ENCODE measurements at regions of chr1 and their contacts with region 1.

Region 1: GRCh38 chr1:153566440-153567379 is 1.1 kb upstream of the S100A2 start:
- DNase-seq: peak; percentile 99
- H3K4me3 ChIP-seq: peak overlapping the region in 2 of 3 experiments; percentile 61 to 98
- H3K27ac ChIP-seq: peak overlapping the region; percentile 100
- H3K4me1 ChIP-seq: peaks cover 40% of the 10 kb centered on the region
- H3K27me3 ChIP-seq: no peaks in the 10 kb centered on the region
- CTCF ChIP-seq: no peak

Region 2: DNA sequence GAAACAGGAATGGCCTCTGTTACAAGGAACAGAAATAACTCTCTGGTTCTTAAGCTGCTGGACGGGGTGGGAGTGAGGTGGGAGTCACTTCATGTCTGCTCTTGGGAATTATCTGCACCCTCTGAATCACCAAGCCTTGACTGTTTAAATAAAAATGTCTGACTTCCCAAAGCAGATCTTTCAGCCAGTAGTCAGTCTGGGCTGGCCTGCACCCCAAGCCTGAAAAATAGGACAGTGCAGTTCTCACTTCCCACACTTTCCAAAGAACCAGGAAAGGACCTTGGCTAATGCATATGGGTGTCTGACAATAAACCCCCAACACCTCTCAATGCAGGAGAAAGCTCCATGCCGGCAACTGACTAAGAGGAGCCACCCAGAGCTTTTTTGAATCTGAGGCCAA is 107.1 kb before region 1 on chr1:
- CTCF ChIA-PET with region 1: no interaction called
- dilution Hi-C with region 1: no loop called
- in situ Hi-C with region 1: no loop called
- intact Hi-C with region 1: no loop called
- DNase-seq: no peak
- H3K4me3 ChIP-seq: no peak overlapping the region
- H3K27ac ChIP-seq: no peak overlapping the region
- H3K4me1 ChIP-seq: no peaks in the 10 kb centered on the region
- H3K27me3 ChIP-seq: peaks cover 3% of the 10 kb centered on the region
- CTCF ChIP-seq: no peak

Region 3: GRCh38 chr1:153626922-153627796 is 60.4 kb after region 1 on chr1 and contains the start of gene S100A13:
- CTCF ChIA-PET with region 1: interaction called, 6 read pairs
- dilution Hi-C with region 1: loop called (anchors 5 kb)
- in situ Hi-C with region 1: loop called in 1 of 2 experiments (anchors 5 kb)
- intact Hi-C with region 1: no loop called
- DNase-seq: peak; percentile 93
- H3K4me3 ChIP-seq: peak within 1 kb of the TSS; percentile 57 to 69 (median 64)
- H3K27ac ChIP-seq: peak within 1 kb of the TSS; percentile 79
- H3K4me1 ChIP-seq: peaks cover 22% of the 10 kb centered on the region
- H3K27me3 ChIP-seq: no peaks in the 10 kb centered on the region
- CTCF ChIP-seq: peak; percentile 65 to 76
- total RNA-seq, gene S100A13: 72.0 to 213 TPM

Region 4: GRCh38 chr1:153639280-153639679 is 72.6 kb after region 1 on chr1:
- CTCF ChIA-PET with region 1: no interaction called
- dilution Hi-C with region 1: no loop called
- in situ Hi-C with region 1: no loop called
- intact Hi-C with region 1: no loop called
- DNase-seq: no peak
- H3K4me3 ChIP-seq: no peak overlapping the region
- H3K27ac ChIP-seq: no peak overlapping the region
- H3K4me1 ChIP-seq: peaks cover 3% of the 10 kb centered on the region
- H3K27me3 ChIP-seq: no peaks in the 10 kb centered on the region
- CTCF ChIP-seq: no peak

Measured in mammary epithelial cell (primary cell).